ENCODE measurements at regions of chr1 and their contacts with region 1.

Region 1: GRCh38 chr1:85576642-85577418 is 3.7 kb upstream of the CCN1 start:
- DNase-seq: no peak
- H3K4me3 ChIP-seq: peak overlapping the region; percentile 62 to 65
- H3K27ac ChIP-seq: peak overlapping the region; percentile 98
- H3K4me1 ChIP-seq: peaks cover 22% of the 10 kb centered on the region
- H3K27me3 ChIP-seq: no peaks in the 10 kb centered on the region
- CTCF ChIP-seq: peak in 2 of 3 experiments; percentile 76 to 86
- POLR2A ChIP-seq: peak in 1 of 2 donors; percentile 70

Region 2: DNA sequence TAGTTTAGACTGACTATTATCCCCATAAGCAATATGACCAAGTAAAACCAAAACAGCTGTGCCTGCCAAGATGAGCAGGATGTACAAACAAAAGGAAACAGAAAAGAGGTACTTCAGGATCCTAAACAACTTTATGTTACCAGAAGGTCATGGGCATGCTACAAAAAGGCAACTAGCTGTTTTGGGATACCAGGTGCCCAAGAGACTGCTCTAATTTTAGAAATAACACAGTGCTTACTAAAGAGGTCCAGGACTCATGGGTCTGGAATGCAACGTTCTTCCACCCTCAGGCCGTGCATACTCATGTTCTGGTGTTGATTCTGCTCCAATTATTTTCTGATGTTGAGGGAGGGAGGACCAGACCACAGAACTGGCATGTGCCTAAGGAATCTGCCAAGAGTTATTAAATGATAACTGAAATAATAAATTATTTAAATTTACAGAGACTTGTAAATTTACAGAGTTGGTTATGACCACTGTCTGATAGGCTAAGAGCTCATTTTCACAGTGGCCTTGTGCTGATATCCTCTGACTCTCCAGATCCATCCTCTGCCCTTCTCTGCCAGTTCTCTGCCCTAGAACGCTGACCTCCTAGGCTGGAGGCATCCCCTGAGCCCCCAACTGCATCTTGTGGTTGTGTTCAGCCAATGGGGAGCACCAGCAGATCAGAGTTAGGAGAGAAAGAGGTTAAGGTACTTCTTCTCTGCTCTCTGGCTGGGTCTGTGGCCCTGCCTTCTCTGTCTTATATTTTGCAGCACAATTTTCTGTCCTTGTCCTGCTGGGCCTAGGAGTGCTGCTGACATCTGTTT is 262.7 kb before region 1 on chr1:
- intact Hi-C with region 1: loop called (anchors 2 kb)
- DNase-seq: no peak
- H3K4me3 ChIP-seq: no peak overlapping the region
- H3K27ac ChIP-seq: peak overlapping the region; percentile 18
- H3K4me1 ChIP-seq: peaks cover 9% of the 10 kb centered on the region
- H3K27me3 ChIP-seq: no peaks in the 10 kb centered on the region
- CTCF ChIP-seq: no peak
- POLR2A ChIP-seq: no peak

Region 3: GRCh38 chr1:85464497-85465098 is 112.2 kb before region 1 on chr1:
- intact Hi-C with region 1: loop called (anchors 10 kb)
- DNase-seq: no peak
- H3K4me3 ChIP-seq: peak overlapping the region; percentile 57 to 61
- H3K27ac ChIP-seq: peak overlapping the region; percentile 63
- H3K4me1 ChIP-seq: peaks cover 36% of the 10 kb centered on the region
- H3K27me3 ChIP-seq: no peaks in the 10 kb centered on the region
- CTCF ChIP-seq: no peak
- POLR2A ChIP-seq: no peak

Region 4: GRCh38 chr1:85940656-85941306 is 364.0 kb after region 1 on chr1:
- intact Hi-C with region 1: no loop called
- DNase-seq: no peak
- H3K4me3 ChIP-seq: no peak overlapping the region
- H3K27ac ChIP-seq: no peak overlapping the region
- H3K4me1 ChIP-seq: no peaks in the 10 kb centered on the region
- H3K27me3 ChIP-seq: no peaks in the 10 kb centered on the region
- CTCF ChIP-seq: no peak
- POLR2A ChIP-seq: no peak